Activated naive CD4-positive, alpha-beta T cell treated with anti-CD3 and anti-CD28 coated beads for 36 hours (primary cell): ENCODE measurements at regions of chr14 and their contacts with region 1.

Region 1: DNA sequence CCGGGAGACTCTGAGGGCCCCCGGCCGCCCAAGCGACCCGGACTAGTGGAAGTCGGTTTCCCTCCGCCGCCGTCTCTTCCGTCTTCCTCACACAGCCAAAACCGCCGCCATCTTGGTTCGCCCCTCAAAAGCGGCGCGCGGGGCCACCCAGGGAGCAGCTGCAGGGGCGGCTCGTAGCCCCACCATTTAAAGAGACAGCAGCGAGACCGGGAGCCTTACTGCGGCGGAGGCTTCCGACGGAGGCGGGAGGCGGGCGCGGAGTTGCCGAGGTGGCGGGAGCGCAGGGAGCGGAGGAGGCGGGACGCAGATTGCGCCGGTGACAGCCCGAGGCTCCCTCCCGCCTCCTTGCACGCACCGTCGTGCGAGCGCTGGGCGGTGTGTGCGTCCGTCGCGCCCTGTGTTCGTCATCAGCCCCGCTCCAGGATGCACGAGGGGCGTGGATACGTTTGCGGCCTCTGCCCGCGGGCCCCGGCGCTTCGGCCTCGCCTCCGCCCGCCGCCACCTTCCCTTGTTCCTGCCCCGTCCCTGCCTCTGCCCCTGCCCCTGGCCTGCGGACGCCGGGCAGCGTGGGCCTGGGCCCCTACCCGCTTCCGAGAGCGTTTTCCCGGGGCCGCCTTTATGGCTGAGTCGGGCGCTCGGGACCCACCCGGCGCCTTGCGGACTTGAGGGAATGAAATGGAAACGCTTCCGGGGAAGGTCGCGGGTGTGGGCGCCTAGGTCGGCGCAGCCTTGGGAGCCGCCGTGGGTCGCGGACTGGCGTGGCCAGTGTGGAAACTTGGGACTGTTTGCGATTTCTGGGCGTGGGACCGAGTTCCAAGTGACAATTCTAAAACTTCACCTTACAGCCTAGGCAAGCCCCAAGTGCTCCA is at the start of gene PPP4R3A:
- DNase-seq: peak; percentile 95
- H3K4me3 Mint-ChIP-seq: peak within 1 kb of the TSS; percentile 99
- H3K27ac Mint-ChIP-seq: peak within 1 kb of the TSS; percentile 100
- H3K4me1 Mint-ChIP-seq: peaks cover 23% of the 10 kb centered on the region
- H3K27me3 Mint-ChIP-seq: no peaks in the 10 kb centered on the region
- total RNA-seq, gene PPP4R3A: 114 to 118 TPM

Region 2: GRCh38 chr14:91220581-91221274 is 289.7 kb before region 1 on chr14:
- CTCF ChIA-PET with region 1: no interaction called
- intact Hi-C with region 1: no loop called
- DNase-seq: no peak
- H3K4me3 Mint-ChIP-seq: no peak overlapping the region
- H3K27ac Mint-ChIP-seq: no peak overlapping the region
- H3K4me1 Mint-ChIP-seq: peaks cover 48% of the 10 kb centered on the region
- H3K27me3 Mint-ChIP-seq: no peaks in the 10 kb centered on the region

Region 3: GRCh38 chr14:91323671-91324605 is 186.5 kb before region 1 on chr14:
- CTCF ChIA-PET with region 1: interaction called, 3 read pairs
- intact Hi-C with region 1: loop called (anchors 2 kb)
- DNase-seq: peak; percentile 99
- H3K4me3 Mint-ChIP-seq: peak overlapping the region; percentile 83
- H3K27ac Mint-ChIP-seq: peak overlapping the region; percentile 99
- H3K4me1 Mint-ChIP-seq: peaks cover 79% of the 10 kb centered on the region
- H3K27me3 Mint-ChIP-seq: no peaks in the 10 kb centered on the region

Region 4: DNA sequence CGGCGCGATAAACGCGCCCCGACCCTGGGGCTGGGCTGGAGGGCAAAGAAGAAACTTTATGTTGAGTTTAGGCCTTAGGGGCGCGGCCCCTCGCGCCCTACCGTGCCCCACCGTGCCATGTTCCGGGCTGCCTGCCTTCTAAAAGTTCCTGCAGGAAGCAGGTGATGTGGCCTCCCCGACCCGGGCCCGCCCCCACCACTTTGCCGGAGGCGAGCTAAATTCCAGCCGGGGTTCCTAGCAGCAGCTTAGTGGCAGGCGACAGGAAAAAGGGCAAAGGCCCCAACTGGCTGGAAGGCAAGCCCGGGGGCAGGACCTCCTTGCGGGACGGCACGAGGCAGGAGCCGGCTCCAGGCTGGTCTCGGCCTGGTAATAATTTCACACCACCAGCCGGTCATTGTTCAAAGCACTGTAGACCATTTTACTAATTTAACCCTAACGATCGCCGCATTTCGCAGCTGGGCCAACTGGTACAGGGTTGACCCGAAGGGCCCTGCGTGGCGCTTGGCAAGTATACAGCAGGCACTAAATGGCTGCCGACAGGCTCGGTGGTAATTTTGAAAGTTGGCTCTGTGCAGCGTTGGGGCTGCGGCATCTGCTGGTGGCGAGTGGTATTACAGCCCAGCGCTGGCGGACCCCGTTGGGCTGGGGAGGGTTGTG is 91.9 kb before region 1 on chr14:
- CTCF ChIA-PET with region 1: no interaction called
- intact Hi-C with region 1: loop called (anchors 1 kb)
- DNase-seq: peak; percentile 84
- H3K4me3 Mint-ChIP-seq: peak overlapping the region; percentile 64
- H3K27ac Mint-ChIP-seq: peak overlapping the region; percentile 74
- H3K4me1 Mint-ChIP-seq: peaks cover 32% of the 10 kb centered on the region
- H3K27me3 Mint-ChIP-seq: no peaks in the 10 kb centered on the region

Region 5: GRCh38 chr14:91484186-91484585 is 26.2 kb before region 1 on chr14:
- CTCF ChIA-PET with region 1: no interaction called
- intact Hi-C with region 1: loop called (anchors 2 kb)
- DNase-seq: peak; percentile 41
- H3K4me3 Mint-ChIP-seq: no peak overlapping the region
- H3K27ac Mint-ChIP-seq: peak overlapping the region; percentile 65
- H3K4me1 Mint-ChIP-seq: peaks cover 50% of the 10 kb centered on the region
- H3K27me3 Mint-ChIP-seq: no peaks in the 10 kb centered on the region

Region 6: GRCh38 chr14:91573893-91574837 is 63.8 kb after region 1 on chr14:
- CTCF ChIA-PET with region 1: no interaction called
- intact Hi-C with region 1: loop called (anchors 2 kb)
- DNase-seq: peak; percentile 96
- H3K4me3 Mint-ChIP-seq: peak overlapping the region; percentile 74
- H3K27ac Mint-ChIP-seq: no peak overlapping the region
- H3K4me1 Mint-ChIP-seq: peaks cover 13% of the 10 kb centered on the region
- H3K27me3 Mint-ChIP-seq: no peaks in the 10 kb centered on the region

Region 7: GRCh38 chr14:91872517-91873470 is 362.4 kb after region 1 on chr14:
- CTCF ChIA-PET with region 1: no interaction called
- intact Hi-C with region 1: loop called (anchors 5 kb)
- DNase-seq: peak; percentile 53
- H3K4me3 Mint-ChIP-seq: peak overlapping the region; percentile 57
- H3K27ac Mint-ChIP-seq: peak overlapping the region; percentile 74
- H3K4me1 Mint-ChIP-seq: peaks cover 87% of the 10 kb centered on the region
- H3K27me3 Mint-ChIP-seq: no peaks in the 10 kb centered on the region

Region 8: DNA sequence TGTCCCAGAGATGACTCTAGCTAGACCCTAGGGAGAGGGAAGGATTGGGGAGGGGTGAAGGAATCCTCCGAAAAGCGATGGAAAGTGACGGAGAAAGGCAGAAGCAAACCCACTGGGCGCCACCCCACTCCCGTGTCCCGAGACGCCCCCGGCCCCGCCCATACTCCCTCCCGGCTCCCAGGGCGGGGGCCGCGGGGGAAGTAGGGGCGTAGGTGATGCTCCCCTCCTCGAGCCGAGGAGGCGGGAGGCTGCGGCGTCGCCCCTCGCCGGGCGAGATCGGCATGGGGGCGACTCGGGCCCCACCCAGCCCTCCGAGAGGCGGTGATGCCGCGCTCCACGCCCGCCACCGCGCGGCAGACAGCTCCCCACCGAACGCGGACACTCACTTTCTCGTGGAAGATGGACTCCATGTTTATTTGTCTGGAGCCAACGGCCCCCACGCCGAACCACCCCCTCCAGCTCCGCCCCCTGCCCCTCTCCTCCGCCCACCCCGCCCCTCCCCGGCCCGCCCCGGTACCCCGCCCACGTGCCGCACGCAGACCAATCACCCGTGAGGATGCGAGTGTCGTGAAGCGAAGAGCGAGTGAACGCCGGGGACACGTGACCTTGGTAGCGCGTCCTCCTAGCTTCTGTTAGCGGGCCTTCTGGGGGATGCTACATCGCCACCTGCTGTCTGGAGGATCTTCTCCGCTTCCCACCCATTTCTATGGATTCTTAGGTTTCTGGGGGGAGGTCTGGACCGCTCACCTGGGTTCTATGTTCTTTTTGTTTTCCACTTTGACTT is 595.9 kb after region 1 on chr14 and contains the start of gene ATXN3:
- CTCF ChIA-PET with region 1: interaction called, 3 read pairs
- intact Hi-C with region 1: loop called (anchors 1 kb)
- DNase-seq: peak; percentile 97
- H3K4me3 Mint-ChIP-seq: peak within 1 kb of the TSS; percentile 98
- H3K27ac Mint-ChIP-seq: peak within 1 kb of the TSS; percentile 81
- H3K4me1 Mint-ChIP-seq: peaks cover 40% of the 10 kb centered on the region
- H3K27me3 Mint-ChIP-seq: no peaks in the 10 kb centered on the region
- total RNA-seq, gene ATXN3: 25.0 to 27.1 TPM